ENCODE measurements at regions of chr12 and their contacts with region 1.

Region 1: DNA sequence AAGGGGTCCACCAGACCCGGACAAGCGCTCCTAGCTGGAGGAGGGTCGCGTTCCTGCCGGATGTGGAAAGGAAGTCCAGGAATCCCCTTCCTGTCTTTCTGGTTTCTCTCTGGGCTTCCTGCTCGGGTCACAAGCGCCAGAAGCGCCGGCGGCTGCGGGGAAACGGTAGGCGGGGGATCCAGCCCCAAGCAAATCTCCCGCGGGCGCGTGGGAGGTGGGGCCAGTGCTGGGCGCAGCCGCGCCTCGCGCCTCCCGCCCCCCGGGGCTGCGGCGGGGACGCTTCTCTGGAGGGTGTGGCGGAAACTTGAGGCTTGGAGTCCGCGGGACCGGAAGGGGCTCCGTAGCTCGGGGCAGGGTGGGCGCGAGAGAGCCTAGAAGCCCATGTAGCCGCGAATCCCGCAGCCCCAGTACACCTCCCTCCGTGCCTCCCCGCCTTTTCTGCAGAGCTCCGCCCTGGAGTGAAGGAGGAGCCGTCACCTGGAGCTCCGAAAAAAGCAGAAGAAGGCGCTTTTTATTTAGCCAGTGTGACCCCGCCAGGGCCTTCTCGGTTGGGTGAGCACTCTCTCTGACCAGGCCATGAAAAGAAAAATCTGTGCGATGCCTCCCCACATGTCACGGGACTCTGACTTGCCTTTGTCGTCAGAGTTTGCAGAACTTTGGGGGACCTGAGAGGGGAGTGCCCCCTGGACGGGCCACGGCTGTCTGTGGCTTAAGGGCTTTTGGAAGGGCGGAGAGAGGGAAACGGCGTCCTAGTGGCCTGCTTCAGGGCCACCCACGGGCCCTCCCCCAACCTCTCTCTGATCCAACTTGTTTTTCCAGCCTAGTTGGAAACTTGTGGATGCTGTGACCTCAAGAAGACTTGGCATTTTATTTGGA is 21.4 kb upstream of the CLEC2D start:
- DNase-seq: peak; percentile 77 to 97 (median 92)
- ATAC-seq: peak; percentile 81
- H3K4me3 ChIP-seq: peak overlapping the region; percentile 67
- H3K4me3 Mint-ChIP-seq: peak overlapping the region; percentile 93 to 100 (median 98)
- H3K27ac ChIP-seq: peak overlapping the region; percentile 92
- H3K27ac Mint-ChIP-seq: peak overlapping the region; percentile 92 to 100 (median 98)
- H3K4me1 ChIP-seq: peaks cover 29 to 42% of the 10 kb centered on the region in 2 donors
- H3K4me1 Mint-ChIP-seq: peaks cover 32 to 65% (median 60%) of the 10 kb centered on the region in 7 donors
- H3K27me3 ChIP-seq: no peaks in the 10 kb centered on the region
- H3K27me3 Mint-ChIP-seq: peaks cover 0 to 5% (median 0%) of the 10 kb centered on the region in 5 donors

Region 2: DNA sequence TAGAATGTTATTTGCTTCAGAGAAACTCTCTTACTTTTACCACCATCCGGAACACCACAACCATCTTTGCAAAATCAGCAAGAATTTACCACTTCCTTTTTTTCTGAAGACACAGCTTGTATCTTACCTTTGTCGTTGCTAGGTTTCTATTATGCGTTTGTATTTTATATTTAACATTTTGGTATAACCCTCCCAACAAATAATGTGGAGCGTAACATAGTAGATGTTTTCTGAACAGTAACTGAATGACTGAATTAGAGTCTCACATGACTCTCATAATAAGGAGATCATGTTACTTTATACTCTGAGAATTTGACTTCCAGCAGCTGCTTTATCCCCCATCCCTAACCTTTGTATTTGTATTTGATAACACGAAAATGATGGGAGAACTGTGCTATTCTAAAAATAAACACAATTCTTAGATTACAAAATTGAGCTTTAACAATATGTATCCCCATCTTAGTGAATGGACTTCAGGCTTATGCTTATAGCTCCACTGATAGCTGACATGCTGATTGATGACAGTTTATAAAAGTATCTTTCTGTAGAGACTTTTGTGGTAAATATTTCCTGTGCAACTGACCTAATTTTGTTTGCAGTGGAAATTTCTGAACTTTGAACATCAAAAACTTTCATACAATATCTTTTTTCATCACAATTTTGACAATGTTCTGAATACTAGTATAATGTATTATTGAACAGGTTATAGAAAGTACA is 32.5 kb before region 1 on chr12:
- CTCF ChIA-PET with region 1: no interaction called
- POLR2A ChIA-PET with region 1: interaction called, 12 read pairs
- intact Hi-C with region 1: loop called (anchors 1 kb)
- DNase-seq: peak in 7 of 9 donors; percentile 28 to 82 (median 69)
- ATAC-seq: peak; percentile 97
- H3K4me3 ChIP-seq: peak overlapping the region; percentile 35
- H3K4me3 Mint-ChIP-seq: peak overlapping the region; percentile 4 to 86 (median 78)
- H3K27ac ChIP-seq: peak overlapping the region; percentile 70
- H3K27ac Mint-ChIP-seq: peak overlapping the region; percentile 92 to 99 (median 96)
- H3K4me1 ChIP-seq: peaks cover 13 to 35% of the 10 kb centered on the region in 2 donors
- H3K4me1 Mint-ChIP-seq: peaks cover 21 to 88% (median 79%) of the 10 kb centered on the region in 7 donors
- H3K27me3 ChIP-seq: no peaks in the 10 kb centered on the region
- H3K27me3 Mint-ChIP-seq: no peaks in the 10 kb centered on the region

Region 3: GRCh38 chr12:9662500-9662899 is 14.4 kb after region 1 on chr12:
- CTCF ChIA-PET with region 1: interaction called, 7 read pairs
- POLR2A ChIA-PET with region 1: interaction called, 784 read pairs
- intact Hi-C with region 1: loop called in 1 of 2 experiments (anchors 1 kb)
- DNase-seq: no peak
- ATAC-seq: peak; percentile 49
- H3K4me3 ChIP-seq: peak overlapping the region; percentile 25
- H3K4me3 Mint-ChIP-seq: peak overlapping the region; percentile 6 to 98 (median 60)
- H3K27ac ChIP-seq: peak overlapping the region; percentile 75
- H3K27ac Mint-ChIP-seq: peak overlapping the region; percentile 65 to 99 (median 86)
- H3K4me1 ChIP-seq: peaks cover 42 to 73% of the 10 kb centered on the region in 2 donors
- H3K4me1 Mint-ChIP-seq: peaks cover 73 to 99% (median 94%) of the 10 kb centered on the region in 7 donors
- H3K27me3 ChIP-seq: no peaks in the 10 kb centered on the region
- H3K27me3 Mint-ChIP-seq: no peaks in the 10 kb centered on the region

Region 4: GRCh38 chr12:9687228-9687627 is 39.2 kb after region 1 on chr12:
- CTCF ChIA-PET with region 1: interaction called, 3 read pairs
- POLR2A ChIA-PET with region 1: interaction called, 686 read pairs
- intact Hi-C with region 1: loop called (anchors 5 kb)
- DNase-seq: no peak
- ATAC-seq: no peak
- H3K4me3 ChIP-seq: no peak overlapping the region
- H3K4me3 Mint-ChIP-seq: peak overlapping the region in 8 of 10 donors; percentile 21 to 89 (median 34)
- H3K27ac ChIP-seq: peak overlapping the region; percentile 40
- H3K27ac Mint-ChIP-seq: peak overlapping the region in 7 of 9 donors; percentile 5 to 83 (median 67)
- H3K4me1 ChIP-seq: peaks cover 26 to 41% of the 10 kb centered on the region in 2 donors
- H3K4me1 Mint-ChIP-seq: peaks cover 34 to 89% (median 77%) of the 10 kb centered on the region in 7 donors
- H3K27me3 ChIP-seq: no peaks in the 10 kb centered on the region
- H3K27me3 Mint-ChIP-seq: no peaks in the 10 kb centered on the region

Region 5: DNA sequence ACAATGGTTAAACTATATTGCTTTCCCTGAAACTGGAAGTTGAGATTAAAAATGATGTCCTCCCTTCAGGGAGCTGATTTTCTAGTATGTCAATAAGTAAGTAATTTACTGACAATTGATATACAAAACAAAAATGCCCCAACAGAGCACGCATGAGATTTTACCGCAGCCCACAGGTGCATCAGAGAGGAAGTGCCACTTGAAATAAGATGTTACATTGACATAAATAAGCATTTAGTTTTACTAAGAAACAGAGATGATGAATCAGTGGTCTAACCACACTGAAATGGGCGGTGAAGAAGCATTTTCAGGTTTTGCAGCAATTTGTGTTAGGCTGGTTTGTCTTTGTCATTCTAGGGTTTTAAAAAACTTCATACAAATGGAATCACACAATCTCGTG is 93.7 kb after region 1 on chr12:
- CTCF ChIA-PET with region 1: interaction called, 7 read pairs
- POLR2A ChIA-PET with region 1: interaction called, 88 read pairs
- intact Hi-C with region 1: loop called (anchors 1 kb)
- DNase-seq: peak in 8 of 9 donors; percentile 63 to 95 (median 90)
- ATAC-seq: peak; percentile 84
- H3K4me3 ChIP-seq: peak overlapping the region; percentile 15
- H3K4me3 Mint-ChIP-seq: peak overlapping the region; percentile 22 to 95 (median 83)
- H3K27ac ChIP-seq: peak overlapping the region; percentile 76
- H3K27ac Mint-ChIP-seq: peak overlapping the region; percentile 89 to 100 (median 98)
- H3K4me1 ChIP-seq: peaks cover 55 to 59% of the 10 kb centered on the region in 2 donors
- H3K4me1 Mint-ChIP-seq: peaks cover 51 to 81% (median 71%) of the 10 kb centered on the region in 7 donors
- H3K27me3 ChIP-seq: no peaks in the 10 kb centered on the region
- H3K27me3 Mint-ChIP-seq: peaks cover 0 to 6% (median 0%) of the 10 kb centered on the region in 5 donors

Region 6: GRCh38 chr12:9940375-9940774 is 292.3 kb after region 1 on chr12:
- CTCF ChIA-PET with region 1: no interaction called
- POLR2A ChIA-PET with region 1: no interaction called
- intact Hi-C with region 1: loop called in 1 of 2 experiments (anchors 10 kb)
- DNase-seq: peak in 3 of 9 donors; percentile 20 to 36 (median 24)
- ATAC-seq: no peak
- H3K4me3 ChIP-seq: no peak overlapping the region
- H3K4me3 Mint-ChIP-seq: no peak overlapping the region
- H3K27ac ChIP-seq: no peak overlapping the region
- H3K27ac Mint-ChIP-seq: peak overlapping the region in 2 of 9 donors; percentile 8 to 32
- H3K4me1 ChIP-seq: no peaks in the 10 kb centered on the region
- H3K4me1 Mint-ChIP-seq: peaks cover 7 to 27% (median 14%) of the 10 kb centered on the region in 7 donors
- H3K27me3 ChIP-seq: no peaks in the 10 kb centered on the region
- H3K27me3 Mint-ChIP-seq: peaks cover 0 to 34% (median 0%) of the 10 kb centered on the region in 5 donors

Region 7: GRCh38 chr12:10249690-10250455 is 601.8 kb after region 1 on chr12:
- CTCF ChIA-PET with region 1: no interaction called
- POLR2A ChIA-PET with region 1: no interaction called
- intact Hi-C with region 1: no loop called
- DNase-seq: no peak
- ATAC-seq: peak; percentile 84
- H3K4me3 ChIP-seq: no peak overlapping the region
- H3K4me3 Mint-ChIP-seq: peak overlapping the region in 1 of 10 donors; percentile 21
- H3K27ac ChIP-seq: no peak overlapping the region
- H3K27ac Mint-ChIP-seq: no peak overlapping the region
- H3K4me1 ChIP-seq: peaks cover 0 to 11% of the 10 kb centered on the region in 2 donors
- H3K4me1 Mint-ChIP-seq: peaks cover 0 to 7% (median 0%) of the 10 kb centered on the region in 7 donors
- H3K27me3 ChIP-seq: no peaks in the 10 kb centered on the region
- H3K27me3 Mint-ChIP-seq: peaks cover 0 to 20% (median 5%) of the 10 kb centered on the region in 5 donors